CD14-positive monocyte (primary cell): ENCODE measurements at regions of chr5 and their contacts with region 1.

Region 1: DNA sequence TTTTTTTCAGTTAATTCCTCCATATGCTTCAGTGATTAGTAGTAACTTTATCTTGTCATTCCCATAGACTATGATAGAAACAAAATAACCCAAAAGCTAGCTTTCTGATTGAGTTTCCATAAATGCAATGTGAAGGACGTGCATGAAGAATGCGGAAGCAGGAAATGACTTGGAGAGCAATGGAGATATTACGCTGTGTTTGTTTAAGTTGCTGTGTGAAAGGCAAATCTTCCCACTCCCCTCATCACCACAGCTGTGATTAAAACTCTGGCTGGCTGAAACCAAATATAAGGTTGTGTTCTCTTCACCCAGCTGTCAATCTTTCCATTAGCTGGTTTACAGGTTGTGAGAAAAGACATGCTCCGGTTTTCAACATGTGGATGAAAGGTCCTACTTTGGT is 83.9 kb downstream of the NR2F1-AS1 start:
- DNase-seq: no peak
- H3K4me3 ChIP-seq: no peak overlapping the region
- H3K4me3 Mint-ChIP-seq: no peak overlapping the region
- H3K27ac ChIP-seq: no peak overlapping the region
- H3K27ac Mint-ChIP-seq: no peak overlapping the region
- H3K4me1 ChIP-seq: no peaks in the 10 kb centered on the region
- H3K4me1 Mint-ChIP-seq: no peaks in the 10 kb centered on the region
- H3K27me3 ChIP-seq: no peaks in the 10 kb centered on the region
- H3K27me3 Mint-ChIP-seq: peaks cover 0 to 1% (median 0%) of the 10 kb centered on the region in 3 donors
- CTCF ChIP-seq: no peak

Region 2: DNA sequence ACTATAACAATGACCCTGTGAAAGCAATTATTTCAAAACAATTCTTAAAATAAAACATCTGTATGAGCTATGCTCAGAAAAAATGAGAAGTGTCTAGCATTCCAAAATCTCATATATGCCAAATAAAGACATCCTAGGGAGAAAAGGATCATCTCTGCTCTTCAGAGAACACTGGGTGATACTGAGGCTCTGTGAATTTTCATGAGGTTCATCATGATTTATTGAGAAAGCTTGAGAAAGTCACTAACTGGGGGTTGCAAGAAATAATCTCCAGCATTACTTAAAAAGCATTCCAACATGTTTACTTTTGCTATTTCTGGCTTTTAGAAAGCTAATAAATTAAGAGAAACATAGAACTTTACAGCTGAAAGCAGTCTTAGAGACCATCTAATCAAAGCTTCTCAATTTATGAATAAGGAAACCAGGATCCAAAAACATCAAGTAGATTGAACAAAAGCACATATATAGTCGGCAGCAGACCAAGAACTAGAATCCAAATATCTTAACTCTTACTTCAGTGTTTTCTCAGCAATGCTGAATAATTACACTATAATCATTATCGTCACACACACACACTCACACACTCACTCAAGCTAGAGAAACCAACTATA is 288.9 kb before region 1 on chr5:
- intact Hi-C with region 1: loop called in 1 of 2 experiments (anchors 5 kb)
- DNase-seq: no peak
- H3K4me3 ChIP-seq: no peak overlapping the region
- H3K4me3 Mint-ChIP-seq: no peak overlapping the region
- H3K27ac ChIP-seq: no peak overlapping the region
- H3K27ac Mint-ChIP-seq: no peak overlapping the region
- H3K4me1 ChIP-seq: no peaks in the 10 kb centered on the region
- H3K4me1 Mint-ChIP-seq: no peaks in the 10 kb centered on the region
- H3K27me3 ChIP-seq: no peaks in the 10 kb centered on the region
- H3K27me3 Mint-ChIP-seq: peaks cover 0 to 1% (median 0%) of the 10 kb centered on the region in 3 donors
- CTCF ChIP-seq: no peak